CD4-positive, alpha-beta memory T cell (primary cell): ENCODE measurements at regions of chr3 and their contacts with region 1.

Region 1: DNA sequence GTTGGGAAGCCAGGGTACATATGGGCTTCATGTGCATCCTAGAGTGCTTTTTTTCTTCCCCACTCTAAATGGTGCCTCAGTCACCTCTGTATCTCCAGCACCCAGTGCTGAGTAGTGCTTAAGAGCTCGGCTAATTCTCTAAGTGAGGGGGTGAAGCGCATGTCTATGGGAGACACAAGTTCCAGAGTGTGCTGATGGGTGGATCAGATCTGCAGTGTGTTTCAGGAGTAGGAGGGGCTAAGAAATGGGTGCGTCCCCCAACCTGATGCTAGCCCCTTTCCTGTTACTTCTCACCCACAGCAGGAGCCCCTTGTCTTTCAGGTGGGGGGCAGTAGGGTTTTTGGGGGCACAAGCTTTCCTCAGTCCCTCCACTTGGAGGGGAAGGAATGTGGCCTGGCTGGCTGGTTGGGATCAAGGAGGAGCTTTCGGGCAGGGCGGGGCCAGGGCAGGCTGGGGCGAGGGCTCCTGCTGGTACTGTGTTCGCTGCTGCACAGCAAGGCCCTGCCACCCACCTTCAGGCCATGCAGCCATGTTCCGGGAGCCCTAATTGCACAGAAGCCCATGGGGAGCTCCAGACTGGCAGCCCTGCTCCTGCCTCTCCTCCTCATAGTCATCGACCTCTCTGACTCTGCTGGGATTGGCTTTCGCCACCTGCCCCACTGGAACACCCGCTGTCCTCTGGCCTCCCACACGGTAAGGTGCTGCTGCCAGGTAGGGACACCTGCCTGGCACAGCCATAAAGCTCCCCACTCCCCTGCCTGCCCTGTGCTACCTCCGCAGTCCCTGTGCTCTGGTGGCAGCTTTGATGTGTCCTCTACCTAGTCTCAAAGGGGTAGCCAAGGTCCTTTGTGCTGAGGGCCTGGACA is at the start of gene IL17RE:
- DNase-seq: peak in 3 of 5 donors; percentile 14 to 33 (median 23)
- H3K4me3 ChIP-seq: peak within 1 kb of the TSS in 1 of 2 donors; percentile 17
- H3K4me3 Mint-ChIP-seq: peak within 1 kb of the TSS; percentile 59 to 80 (median 74)
- H3K27ac ChIP-seq: peak within 1 kb of the TSS; percentile 35
- H3K27ac Mint-ChIP-seq: peak within 1 kb of the TSS; percentile 67 to 94 (median 88)
- H3K4me1 ChIP-seq: peaks cover 29% of the 10 kb centered on the region
- H3K4me1 Mint-ChIP-seq: peaks cover 24 to 41% (median 25%) of the 10 kb centered on the region in 4 donors
- H3K27me3 ChIP-seq: no peaks in the 10 kb centered on the region
- H3K27me3 Mint-ChIP-seq: no peaks in the 10 kb centered on the region
- total RNA-seq, gene IL17RE: 1.5 to 2.4 TPM

Region 2: DNA sequence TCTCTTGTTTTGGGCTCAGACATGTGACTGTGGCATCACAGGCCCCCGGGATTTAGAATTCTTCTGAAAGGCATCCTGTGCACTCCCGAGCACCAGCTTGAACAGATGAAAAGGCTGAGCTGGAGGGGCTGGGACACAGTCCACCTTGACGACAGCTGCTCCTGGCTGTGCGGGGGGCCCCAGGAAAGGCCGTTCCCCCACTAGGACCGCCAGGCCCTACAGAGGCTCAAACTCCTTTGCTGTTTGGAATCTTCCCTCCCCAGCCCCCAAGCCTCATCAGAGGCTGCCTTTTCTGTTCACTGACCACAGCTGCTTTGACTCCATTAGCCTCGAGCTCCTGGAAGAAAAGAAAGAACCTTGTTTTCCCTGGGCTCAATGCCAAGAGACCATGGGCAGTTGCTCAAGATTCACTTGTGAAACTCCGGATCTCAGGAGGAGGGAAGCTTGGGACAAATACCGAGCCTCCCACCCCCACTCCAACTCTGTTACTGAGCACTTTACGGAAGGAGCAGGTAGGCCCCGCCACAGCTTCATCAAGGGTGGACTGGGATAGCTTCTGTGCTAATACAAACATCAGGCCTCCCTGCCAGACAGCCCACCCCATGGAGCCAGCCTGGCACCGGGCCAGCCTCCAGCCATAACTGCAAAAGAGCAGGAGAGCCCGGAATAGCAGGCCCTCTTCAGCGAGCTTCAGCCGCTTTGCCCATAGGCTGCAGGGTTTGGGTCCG is 38.2 kb before region 1 on chr3:
- CTCF ChIA-PET with region 1: no interaction called
- POLR2A ChIA-PET with region 1: no interaction called
- intact Hi-C with region 1: loop called (anchors 1 kb)
- DNase-seq: no peak
- H3K4me3 ChIP-seq: no peak overlapping the region
- H3K4me3 Mint-ChIP-seq: no peak overlapping the region
- H3K27ac ChIP-seq: no peak overlapping the region
- H3K27ac Mint-ChIP-seq: no peak overlapping the region
- H3K4me1 ChIP-seq: no peaks in the 10 kb centered on the region
- H3K4me1 Mint-ChIP-seq: peaks cover 0 to 4% (median 0%) of the 10 kb centered on the region in 4 donors
- H3K27me3 ChIP-seq: peaks cover 7% of the 10 kb centered on the region
- H3K27me3 Mint-ChIP-seq: peaks cover 5 to 8% of the 10 kb centered on the region in 2 donors

Region 3: GRCh38 chr3:9915254-9916141 is 12.9 kb after region 1 on chr3:
- CTCF ChIA-PET with region 1: interaction called, 4 read pairs
- POLR2A ChIA-PET with region 1: interaction called, 25 read pairs
- intact Hi-C with region 1: no loop called
- DNase-seq: peak in 1 of 5 donors; percentile 25
- H3K4me3 ChIP-seq: peak overlapping the region; percentile 36 to 55
- H3K4me3 Mint-ChIP-seq: peak overlapping the region; percentile 62 to 85 (median 79)
- H3K27ac ChIP-seq: no peak overlapping the region
- H3K27ac Mint-ChIP-seq: peak overlapping the region in 1 of 7 donors; percentile 17
- H3K4me1 ChIP-seq: peaks cover 30% of the 10 kb centered on the region
- H3K4me1 Mint-ChIP-seq: peaks cover 13 to 23% (median 17%) of the 10 kb centered on the region in 4 donors
- H3K27me3 ChIP-seq: no peaks in the 10 kb centered on the region
- H3K27me3 Mint-ChIP-seq: peaks cover 0 to 2% of the 10 kb centered on the region in 2 donors

Region 4: DNA sequence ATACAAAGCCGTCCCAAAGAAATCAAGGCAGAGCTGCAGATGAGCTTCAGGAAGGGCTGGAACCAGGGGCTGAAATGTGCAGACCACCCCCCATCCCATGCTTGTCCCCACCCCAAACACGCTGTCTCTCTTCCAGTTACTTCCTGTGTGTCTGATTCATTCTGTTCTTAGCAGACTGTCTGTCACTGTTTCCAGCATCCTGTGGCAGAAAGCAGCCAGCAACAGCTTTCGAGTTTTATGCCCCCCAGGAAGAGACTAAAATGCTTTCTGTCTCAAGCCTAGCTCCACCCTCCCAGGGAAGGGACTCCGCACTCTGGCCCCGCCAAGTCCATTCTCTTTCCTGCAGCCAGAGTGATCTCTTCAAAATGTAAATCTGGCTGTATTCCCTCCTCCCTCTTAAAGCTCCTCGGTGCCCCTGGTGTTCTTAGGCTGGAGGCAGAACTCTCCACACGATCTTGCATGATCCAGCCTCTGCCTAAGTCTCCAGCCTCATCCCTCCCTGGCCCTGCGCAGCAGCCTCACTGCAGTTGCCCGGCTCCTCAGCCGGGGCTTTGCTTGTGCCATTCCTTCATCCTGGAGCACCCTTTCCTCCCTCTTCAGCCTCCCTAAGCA is 1293.2 kb after region 1 on chr3:
- CTCF ChIA-PET with region 1: no interaction called
- POLR2A ChIA-PET with region 1: no interaction called
- intact Hi-C with region 1: no loop called
- DNase-seq: no peak
- H3K4me3 ChIP-seq: no peak overlapping the region
- H3K4me3 Mint-ChIP-seq: no peak overlapping the region
- H3K27ac ChIP-seq: no peak overlapping the region
- H3K27ac Mint-ChIP-seq: no peak overlapping the region
- H3K4me1 ChIP-seq: no peaks in the 10 kb centered on the region
- H3K4me1 Mint-ChIP-seq: peaks cover 0 to 3% (median 1%) of the 10 kb centered on the region in 4 donors
- H3K27me3 ChIP-seq: no peaks in the 10 kb centered on the region
- H3K27me3 Mint-ChIP-seq: peaks cover 11 to 19% of the 10 kb centered on the region in 2 donors